Caco-2 (cell line): ENCODE measurements at regions of chr2 and their contacts with region 1.

Region 1: DNA sequence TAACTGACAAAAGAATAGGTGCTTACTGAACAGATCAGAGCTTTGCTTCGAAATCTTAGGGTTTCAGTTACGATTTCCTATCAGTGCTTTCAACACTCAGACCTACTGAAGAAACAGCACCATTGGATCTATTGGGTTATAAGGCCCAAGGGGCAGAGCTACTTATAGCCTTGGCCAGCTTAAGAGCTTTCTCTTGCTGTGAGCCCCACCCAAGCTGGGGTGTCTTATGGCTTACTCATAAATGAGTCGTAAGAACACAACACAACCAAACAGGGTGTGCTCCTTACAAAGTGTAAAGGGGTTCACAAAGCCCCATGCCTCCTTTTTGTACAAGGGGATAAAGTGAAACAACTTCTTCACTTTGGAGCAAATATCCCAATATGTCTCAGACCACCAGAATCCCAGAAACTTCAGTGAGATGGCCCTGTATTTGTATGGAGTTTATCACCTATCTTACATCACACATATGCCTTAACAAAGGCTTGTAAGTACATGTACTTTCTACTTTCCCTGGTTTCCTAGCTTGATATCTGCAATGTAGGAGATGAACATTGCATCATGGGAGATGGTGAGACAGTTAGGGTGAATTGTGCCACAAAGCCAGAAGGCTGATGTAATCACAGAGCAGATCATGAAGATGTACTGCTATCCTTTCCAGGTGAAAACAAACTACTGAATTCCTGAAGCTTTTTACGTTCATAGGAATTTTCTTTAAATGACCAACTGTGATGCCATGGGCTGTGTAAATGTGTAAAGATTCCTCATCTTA is 115.5 kb upstream of the GLI2 start:
- DNase-seq: no peak
- H3K4me3 ChIP-seq: no peak overlapping the region
- H3K4me3 Mint-ChIP-seq: no peak overlapping the region
- H3K27ac Mint-ChIP-seq: peak overlapping the region; percentile 50
- H3K4me1 ChIP-seq: peaks cover 11% of the 10 kb centered on the region
- H3K4me1 Mint-ChIP-seq: no peaks in the 10 kb centered on the region
- H3K27me3 ChIP-seq: no peaks in the 10 kb centered on the region
- H3K27me3 Mint-ChIP-seq: no peaks in the 10 kb centered on the region
- CTCF ChIP-seq: no peak

Region 2: DNA sequence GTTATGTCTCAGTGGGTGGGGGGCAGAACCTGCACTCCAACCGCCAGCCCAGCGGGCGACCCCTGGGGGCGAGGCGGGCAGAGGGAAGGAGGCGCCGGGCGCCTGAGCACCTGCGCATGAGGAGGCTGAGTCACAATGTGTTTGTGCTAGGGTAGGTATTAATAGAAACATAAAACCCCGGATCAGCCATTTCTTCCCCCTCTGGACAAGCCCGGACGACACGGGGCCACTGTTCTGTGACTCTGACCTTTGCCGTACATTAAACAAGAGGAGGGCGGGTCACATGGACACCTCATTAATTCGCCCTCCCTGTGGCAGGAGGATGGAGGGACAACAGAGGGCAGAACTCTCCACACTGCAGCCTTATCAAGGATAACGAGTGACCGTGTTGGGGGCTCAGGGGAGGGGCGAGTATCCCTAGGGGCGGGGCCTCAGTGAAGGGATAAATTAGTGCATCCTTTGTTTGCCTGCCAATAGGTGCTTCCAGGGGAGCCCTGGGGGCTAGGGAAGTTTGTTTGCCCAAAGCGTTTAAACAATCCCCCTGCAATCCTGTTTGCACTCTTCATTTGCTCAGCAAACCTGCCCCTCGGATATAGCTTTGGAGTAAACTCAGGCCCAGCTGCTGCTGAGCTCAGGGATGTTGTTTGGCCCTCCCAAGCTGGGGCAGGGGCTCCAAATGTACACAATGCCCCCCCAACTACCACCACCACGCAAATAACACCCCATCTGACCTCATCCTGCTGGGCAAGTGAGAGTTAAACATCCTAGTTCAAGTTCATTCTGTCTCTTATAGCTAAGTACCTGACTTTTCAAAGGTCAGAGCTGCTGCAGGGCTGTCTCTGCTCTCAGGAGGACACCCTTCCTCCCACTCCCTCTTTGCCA is 55.8 kb before region 1 on chr2:
- CTCF ChIA-PET with region 1: no interaction called
- POLR2A ChIA-PET with region 1: no interaction called
- intact Hi-C with region 1: loop called (anchors 1 kb)
- DNase-seq: peak; percentile 48 to 66
- H3K4me3 ChIP-seq: no peak overlapping the region
- H3K4me3 Mint-ChIP-seq: no peak overlapping the region
- H3K27ac Mint-ChIP-seq: no peak overlapping the region
- H3K4me1 ChIP-seq: peaks cover 26% of the 10 kb centered on the region; the same call in 1 of the 2 replicates
- H3K4me1 Mint-ChIP-seq: peaks cover 22% of the 10 kb centered on the region
- H3K27me3 ChIP-seq: no peaks in the 10 kb centered on the region
- H3K27me3 Mint-ChIP-seq: no peaks in the 10 kb centered on the region
- CTCF ChIP-seq: peak in 1 of 2 experiments; percentile 8